ENCODE measurements at regions of chr17 and their contacts with region 1.

Region 1: DNA sequence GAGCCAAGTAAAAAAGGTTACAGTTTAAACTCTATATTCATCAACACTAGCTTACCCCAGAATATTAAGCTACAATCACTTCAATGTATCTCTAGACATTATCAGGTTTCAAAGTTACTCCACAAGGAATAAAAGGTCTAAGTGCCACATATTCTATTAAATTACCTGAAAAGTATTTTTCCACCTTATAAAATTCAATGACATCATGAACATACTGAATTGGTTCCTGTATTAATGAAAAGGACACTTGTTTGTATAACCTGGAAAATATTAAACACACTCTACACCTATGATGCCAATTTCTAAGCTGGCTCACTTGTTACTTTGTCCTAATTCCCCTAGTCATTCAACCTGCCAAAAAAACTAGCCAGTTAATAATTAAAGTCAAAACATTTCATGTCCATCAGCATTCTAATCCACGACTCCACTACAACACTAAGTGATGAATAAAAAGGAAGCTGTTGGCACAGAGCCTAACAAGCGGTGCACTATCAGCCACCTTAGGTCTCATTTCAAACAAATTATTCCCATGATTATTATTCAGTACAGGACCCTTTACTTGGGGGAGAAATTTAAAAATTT is 12.2 kb downstream of the MED13 start:
- DNase-seq: no peak
- ATAC-seq: no peak
- H3K4me3 ChIP-seq: no peak overlapping the region
- H3K27ac ChIP-seq: no peak overlapping the region
- H3K4me1 ChIP-seq: no peaks in the 10 kb centered on the region
- H3K27me3 ChIP-seq: no peaks in the 10 kb centered on the region
- CTCF ChIP-seq: no peak
- EP300 ChIP-seq: no peak
- POLR2A ChIP-seq: no peak
- RAD21 ChIP-seq: no peak

Region 2: GRCh38 chr17:61924178-61924577 is 128.7 kb before region 1 on chr17:
- CTCF ChIA-PET with region 1: no interaction called
- POLR2A ChIA-PET with region 1: interaction called, 10 read pairs
- RAD21 ChIA-PET with region 1: no interaction called
- SMC1A ChIA-PET with region 1: no interaction called
- in situ Hi-C with region 1: no loop called
- intact Hi-C with region 1: no loop called
- DNase-seq: no peak
- ATAC-seq: no peak
- H3K4me3 ChIP-seq: no peak overlapping the region
- H3K27ac ChIP-seq: no peak overlapping the region
- H3K4me1 ChIP-seq: peaks cover 5% of the 10 kb centered on the region; the same call in 1 of the 2 replicates
- H3K27me3 ChIP-seq: no peaks in the 10 kb centered on the region
- CTCF ChIP-seq: no peak
- EP300 ChIP-seq: no peak
- POLR2A ChIP-seq: no peak
- RAD21 ChIP-seq: no peak